HAP-1 (cell line): ENCODE measurements at regions of chr11 and their contacts with region 1.

Region 1: GRCh38 chr11:59753650-59754493 is 1.3 kb upstream of the STX3 start:
- DNase-seq: peak; percentile 54 to 92
- H3K4me3 ChIP-seq: peak overlapping the region; percentile 70
- H3K4me1 ChIP-seq: peaks cover 8% of the 10 kb centered on the region
- H3K27me3 ChIP-seq: no peaks in the 10 kb centered on the region

Region 2: DNA sequence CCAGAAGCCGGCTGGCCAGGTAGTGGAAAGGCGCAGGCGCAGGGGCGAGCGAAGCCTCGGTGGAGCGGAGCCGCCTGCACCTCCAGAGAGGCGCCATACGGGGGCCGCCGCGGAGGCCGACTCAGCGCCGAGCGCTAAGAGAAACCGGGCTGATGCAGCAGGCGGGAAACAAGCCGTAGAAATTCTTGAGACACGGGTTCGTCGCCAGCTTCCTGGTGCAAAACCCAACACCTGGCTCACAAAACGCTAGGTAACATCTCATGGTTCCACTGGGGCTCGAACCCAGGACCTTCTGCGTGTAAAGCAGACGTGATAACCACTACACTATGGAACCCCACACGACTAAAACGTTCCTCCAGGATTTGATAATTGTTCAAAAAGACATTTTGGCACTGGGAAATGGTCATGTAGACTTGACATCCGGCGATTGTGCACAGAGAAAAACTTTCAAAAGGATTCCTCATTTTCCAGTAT is 203.5 kb before region 1 on chr11:
- in situ Hi-C with region 1: loop called (anchors 25 kb)
- DNase-seq: peak; percentile 95 to 96
- H3K4me3 ChIP-seq: peak overlapping the region; percentile 44
- H3K4me1 ChIP-seq: peaks cover 20% of the 10 kb centered on the region
- H3K27me3 ChIP-seq: no peaks in the 10 kb centered on the region

Region 3: DNA sequence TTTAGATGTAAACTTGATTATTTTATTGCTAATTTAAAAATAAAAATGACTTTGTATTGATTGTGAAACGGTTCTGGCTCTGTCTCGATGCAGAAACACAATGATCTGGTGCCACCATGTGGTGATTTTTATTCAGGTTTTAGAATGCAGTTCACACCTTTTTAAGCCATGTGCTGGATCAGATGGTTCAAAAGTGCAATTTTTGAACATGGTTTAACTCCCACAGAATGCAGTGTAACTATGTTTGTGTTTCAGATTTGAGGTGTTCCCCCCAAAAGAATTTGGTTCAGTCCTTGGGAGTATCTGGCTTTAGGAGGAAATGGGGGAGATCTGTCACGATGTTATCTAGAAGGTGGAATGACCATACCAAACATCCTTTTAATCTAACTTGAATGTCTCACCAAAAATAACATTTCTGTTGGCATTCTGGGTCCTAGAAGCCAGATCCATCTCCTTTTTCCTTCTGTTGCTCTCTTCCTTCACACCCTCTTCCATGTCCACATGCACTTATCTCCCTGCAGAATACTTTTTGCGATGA is 48.8 kb after region 1 on chr11:
- in situ Hi-C with region 1: loop called (anchors 10 kb)
- DNase-seq: peak; percentile 28 to 35
- H3K4me3 ChIP-seq: no peak overlapping the region
- H3K4me1 ChIP-seq: no peaks in the 10 kb centered on the region
- H3K27me3 ChIP-seq: no peaks in the 10 kb centered on the region

Region 4: DNA sequence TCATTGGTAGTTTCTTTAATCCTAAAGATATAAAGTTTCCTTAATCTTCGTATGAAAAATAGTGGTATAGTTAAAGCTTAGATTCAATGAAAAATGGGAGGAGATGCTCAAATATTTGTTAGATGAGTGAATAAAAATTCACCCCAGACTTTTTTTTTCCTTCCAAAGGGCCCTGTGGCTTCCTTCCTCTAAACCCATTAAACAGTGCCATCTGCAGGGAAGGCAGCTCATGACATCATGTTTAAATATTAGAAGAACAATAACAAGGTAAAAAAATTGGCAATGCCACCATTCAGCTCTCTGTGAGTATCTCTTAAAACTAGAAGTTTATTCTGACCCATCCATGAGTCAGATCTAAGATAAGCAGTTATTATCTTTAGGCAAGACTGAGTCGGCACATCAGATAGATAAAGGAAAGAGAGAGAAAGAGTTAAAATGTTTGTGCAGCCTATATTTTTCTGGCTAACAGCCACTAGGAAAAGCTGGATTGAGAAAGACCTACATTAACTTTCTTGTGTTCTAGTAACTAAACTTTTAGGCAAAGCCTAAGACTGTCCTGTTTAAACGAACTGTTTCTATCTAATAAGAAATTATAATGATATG is 165.2 kb after region 1 on chr11:
- in situ Hi-C with region 1: loop called (anchors 10 kb)
- DNase-seq: peak; percentile 63 to 67
- H3K4me3 ChIP-seq: no peak overlapping the region
- H3K4me1 ChIP-seq: no peaks in the 10 kb centered on the region
- H3K27me3 ChIP-seq: no peaks in the 10 kb centered on the region